GM23248 (cell line): ENCODE measurements at regions of chr22 and their contacts with region 1.

Region 1: DNA sequence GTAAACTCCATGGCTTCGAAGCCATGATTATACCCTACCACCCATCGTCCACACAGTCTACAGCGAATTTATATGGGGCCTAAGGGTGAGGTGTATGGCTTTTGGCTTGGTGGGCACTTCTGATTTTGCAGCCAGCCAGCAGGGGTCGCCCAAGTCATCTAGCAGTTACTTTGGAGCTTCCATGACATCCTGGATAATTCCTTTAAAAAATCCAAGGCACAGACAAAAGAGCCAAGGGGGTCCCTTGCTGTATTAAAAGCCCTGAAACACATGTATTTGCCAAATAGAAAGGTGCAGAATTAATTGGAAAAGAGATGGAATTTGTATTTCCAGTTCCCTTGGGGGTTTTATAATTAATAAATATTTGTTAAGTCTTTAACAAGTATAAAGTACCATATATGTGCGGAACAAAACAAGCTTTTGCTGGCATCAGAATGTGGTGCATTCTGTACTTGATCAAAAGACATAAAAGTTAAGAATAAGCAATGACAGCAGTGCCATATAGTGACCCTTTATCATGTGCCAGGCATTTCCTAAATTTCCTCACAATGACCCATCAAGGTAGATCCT is 132.8 kb upstream of the PITPNB start:
- DNase-seq: peak; percentile 72
- H3K4me3 ChIP-seq: no peak overlapping the region
- H3K27ac ChIP-seq: no peak overlapping the region
- H3K4me1 ChIP-seq: peaks cover 17% of the 10 kb centered on the region
- H3K27me3 ChIP-seq: no peaks in the 10 kb centered on the region

Region 2: GRCh38 chr22:28112548-28113043 is 60.7 kb after region 1 on chr22:
- in situ Hi-C with region 1: no loop called
- DNase-seq: peak; percentile 95
- H3K4me3 ChIP-seq: no peak overlapping the region
- H3K27ac ChIP-seq: peak overlapping the region; percentile 73
- H3K4me1 ChIP-seq: peaks cover 70% of the 10 kb centered on the region
- H3K27me3 ChIP-seq: no peaks in the 10 kb centered on the region

Region 3: DNA sequence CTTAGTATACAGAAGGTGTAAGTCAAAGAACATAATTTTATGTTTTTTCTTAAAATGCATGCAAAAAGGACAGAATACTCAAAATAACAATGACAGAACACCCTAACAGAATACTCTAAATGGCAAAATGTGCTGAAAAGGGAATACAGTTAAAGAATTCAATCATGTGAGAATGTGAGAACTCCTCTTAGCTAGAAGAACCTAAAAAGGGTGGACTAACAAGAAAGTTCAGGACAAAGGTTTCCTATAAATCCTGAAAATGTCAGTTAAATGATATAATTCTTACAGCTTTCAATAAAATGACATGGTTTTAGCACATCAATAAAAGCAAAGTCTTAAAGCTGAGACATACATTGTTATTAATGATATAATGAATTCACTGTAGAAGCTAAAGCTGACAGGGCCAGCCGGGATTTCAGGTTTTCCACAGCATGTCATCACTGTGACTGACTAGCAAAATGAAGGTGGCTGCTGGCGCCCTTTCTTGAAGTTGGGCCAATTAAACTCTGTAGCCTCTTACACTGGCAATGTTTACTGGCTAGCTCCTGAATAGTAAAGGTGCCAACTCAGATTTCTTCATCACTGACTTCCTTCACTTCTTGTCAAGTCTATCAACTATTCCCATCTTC is 383.4 kb after region 1 on chr22:
- in situ Hi-C with region 1: loop called (anchors 10 kb)
- DNase-seq: peak; percentile 37
- H3K4me3 ChIP-seq: no peak overlapping the region
- H3K27ac ChIP-seq: no peak overlapping the region
- H3K4me1 ChIP-seq: peaks cover 28% of the 10 kb centered on the region
- H3K27me3 ChIP-seq: no peaks in the 10 kb centered on the region

Region 4: GRCh38 chr22:28582806-28583205 is 530.9 kb after region 1 on chr22:
- in situ Hi-C with region 1: loop called (anchors 10 kb)
- DNase-seq: peak; percentile 93
- H3K4me3 ChIP-seq: peak overlapping the region; percentile 21
- H3K27ac ChIP-seq: peak overlapping the region; percentile 82
- H3K4me1 ChIP-seq: peaks cover 23% of the 10 kb centered on the region
- H3K27me3 ChIP-seq: no peaks in the 10 kb centered on the region